ENCODE measurements at regions of chr18 and their contacts with region 1.

Region 1: GRCh38 chr18:74652392-74652988 is 54.8 kb downstream of the ZNF407 start:
- DNase-seq: peak; percentile 64
- H3K4me3 ChIP-seq: no peak overlapping the region
- H3K27ac ChIP-seq: no peak overlapping the region
- H3K4me1 ChIP-seq: peaks cover 4% of the 10 kb centered on the region; the same call in 1 of the 2 replicates
- H3K27me3 ChIP-seq: no peaks in the 10 kb centered on the region

Region 2: DNA sequence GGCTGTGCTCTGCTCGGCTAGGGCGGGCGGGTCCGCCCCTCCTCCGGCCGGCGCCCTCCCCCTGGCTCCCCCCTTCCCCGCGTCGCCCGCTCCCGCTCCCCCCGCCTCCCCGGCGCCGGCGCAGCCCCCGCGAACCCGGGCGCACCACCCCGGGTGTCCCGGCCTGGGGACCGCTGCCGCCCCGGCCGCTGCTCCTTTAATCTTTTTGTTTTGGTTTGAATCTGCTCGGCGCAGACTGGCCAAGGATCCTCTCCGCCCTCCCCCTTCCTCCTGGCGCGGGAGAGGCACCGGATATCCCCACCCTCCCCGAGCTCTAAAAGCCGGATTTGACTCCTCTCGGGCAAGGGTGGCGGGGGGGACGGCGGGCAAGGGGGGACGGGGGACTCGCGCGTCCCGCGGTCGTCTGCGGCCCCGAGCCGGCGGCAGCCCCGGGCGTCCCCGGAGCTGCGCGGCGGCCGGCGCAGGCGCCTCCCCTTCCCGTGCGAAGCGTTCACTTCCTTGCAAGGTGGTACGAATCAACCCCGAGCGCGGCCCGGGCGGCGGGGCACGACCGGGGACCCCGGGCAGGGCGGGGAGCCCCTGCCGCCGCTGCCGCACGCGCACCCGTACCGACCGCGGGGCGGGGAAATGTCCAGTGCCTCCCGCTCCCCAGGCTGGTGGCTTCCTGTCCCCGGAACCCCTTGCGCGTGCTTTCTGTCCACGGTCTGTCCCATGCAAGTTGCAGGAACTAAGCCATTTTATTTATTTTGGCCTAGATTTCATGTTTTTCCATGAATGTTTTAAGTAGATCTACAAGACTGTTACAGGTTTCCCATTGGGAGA is 556.9 kb after region 1 on chr18 and contains the start of gene PTGR3:
- in situ Hi-C with region 1: loop called (anchors 25 kb)
- DNase-seq: peak; percentile 85
- H3K4me3 ChIP-seq: peak within 1 kb of the TSS; percentile 92
- H3K27ac ChIP-seq: peak within 1 kb of the TSS; percentile 78
- H3K4me1 ChIP-seq: peaks cover 36% of the 10 kb centered on the region
- H3K27me3 ChIP-seq: no peaks in the 10 kb centered on the region
- total RNA-seq, gene PTGR3: 8.1 and 21.3 TPM in 2 replicates

Region 3: DNA sequence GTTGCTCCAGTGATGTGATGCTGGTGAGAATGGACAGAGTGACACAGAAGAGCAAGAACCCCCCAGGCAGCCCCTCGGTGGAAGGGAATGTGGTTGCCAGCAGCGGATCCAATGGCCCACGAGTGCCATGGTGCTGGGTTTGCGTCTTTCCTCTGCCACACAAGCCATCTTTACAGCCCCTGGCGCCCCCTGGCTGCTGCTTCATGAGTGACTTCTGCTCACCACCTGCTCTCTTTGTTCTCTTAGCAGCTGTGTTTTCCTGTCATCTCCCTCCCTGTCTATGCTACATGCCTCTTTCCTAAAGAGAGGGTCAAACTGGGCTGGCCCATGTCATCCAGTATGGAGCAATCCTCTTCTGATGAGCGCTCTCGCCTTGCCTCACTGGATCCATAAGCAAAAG is 1075.0 kb after region 1 on chr18:
- in situ Hi-C with region 1: loop called (anchors 10 kb)
- DNase-seq: peak; percentile 68
- H3K4me3 ChIP-seq: no peak overlapping the region
- H3K27ac ChIP-seq: no peak overlapping the region
- H3K4me1 ChIP-seq: no peaks in the 10 kb centered on the region
- H3K27me3 ChIP-seq: peaks cover 20% of the 10 kb centered on the region

Region 4: DNA sequence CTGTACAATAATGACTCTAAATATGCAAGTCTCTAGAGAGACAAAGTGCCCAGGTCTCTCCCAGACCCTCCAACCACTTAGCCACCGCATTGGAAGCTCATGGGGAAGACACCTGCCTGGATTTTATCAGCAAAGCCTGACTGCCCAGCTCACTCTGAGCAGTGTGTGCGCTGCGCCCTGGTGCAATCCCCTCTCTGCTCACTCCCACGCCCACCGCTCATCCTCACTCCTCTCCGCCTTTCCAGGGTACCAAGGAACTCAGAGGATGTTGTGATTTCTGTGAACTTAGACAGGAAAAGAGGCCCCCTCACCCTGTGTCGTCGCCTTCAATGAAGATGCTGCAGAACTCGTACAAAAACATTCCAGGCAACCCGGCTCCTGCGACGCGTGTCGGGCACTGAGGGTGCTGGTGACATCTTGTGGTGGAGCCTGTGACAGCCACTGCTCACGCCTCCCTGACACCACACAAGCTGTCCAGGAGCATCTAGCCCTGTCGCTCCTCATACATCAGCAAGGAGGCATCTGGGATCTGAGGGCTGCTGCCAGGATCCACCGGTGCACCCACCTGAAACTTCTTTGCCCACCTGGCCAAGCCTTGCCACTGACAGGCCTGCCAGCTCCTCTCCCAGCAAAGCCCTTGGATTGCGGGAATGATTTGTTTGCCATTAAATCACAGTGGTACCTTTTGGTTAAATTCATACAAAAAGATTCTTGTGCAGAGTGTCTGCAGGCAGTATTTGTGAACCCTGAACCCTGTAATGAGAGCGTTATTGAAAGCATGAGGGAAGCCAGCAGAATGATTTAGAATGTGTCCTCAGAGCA is 1622.2 kb after region 1 on chr18:
- in situ Hi-C with region 1: loop called (anchors 25 kb)
- DNase-seq: no peak
- H3K4me3 ChIP-seq: no peak overlapping the region
- H3K27ac ChIP-seq: no peak overlapping the region
- H3K4me1 ChIP-seq: no peaks in the 10 kb centered on the region
- H3K27me3 ChIP-seq: no peaks in the 10 kb centered on the region

Region 5: DNA sequence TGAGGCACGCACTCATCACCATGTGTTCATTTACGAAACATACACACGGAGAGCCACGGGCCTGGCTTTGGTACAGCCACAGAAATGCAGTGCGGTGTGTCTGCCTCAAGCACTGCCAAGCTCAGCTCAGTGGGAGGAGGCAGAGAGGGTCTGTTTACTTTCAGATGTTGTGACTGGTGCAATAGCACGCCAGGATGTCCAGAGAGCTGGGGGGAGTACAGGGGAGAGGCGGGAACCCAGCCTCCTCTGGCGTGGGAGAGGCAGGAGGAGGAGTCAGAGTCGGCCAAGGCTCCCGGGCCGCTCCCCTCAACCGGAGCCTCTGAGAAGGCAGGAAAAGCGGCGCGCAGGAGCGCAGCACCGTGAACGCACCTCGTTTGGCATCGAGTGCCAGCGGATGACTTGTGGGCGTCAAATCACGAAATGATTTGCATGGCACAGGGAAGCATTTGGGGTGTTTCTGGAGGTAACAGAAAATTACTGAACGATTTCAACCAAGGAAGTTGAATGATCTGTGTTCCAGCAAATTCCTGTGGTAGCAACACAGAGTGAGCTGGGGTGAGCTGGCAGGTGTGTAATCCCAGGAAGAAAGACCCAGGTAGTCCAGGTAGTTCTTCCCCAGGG is 1699.6 kb after region 1 on chr18:
- in situ Hi-C with region 1: loop called (anchors 25 kb)
- DNase-seq: peak; percentile 91
- H3K4me3 ChIP-seq: peak overlapping the region; percentile 66
- H3K27ac ChIP-seq: no peak overlapping the region; the same call in 1 of the 2 replicates
- H3K4me1 ChIP-seq: peaks cover 16% of the 10 kb centered on the region
- H3K27me3 ChIP-seq: no peaks in the 10 kb centered on the region